WTC11 (cell line): ENCODE measurements at regions of chr19 and their contacts with region 1.

Region 1: DNA sequence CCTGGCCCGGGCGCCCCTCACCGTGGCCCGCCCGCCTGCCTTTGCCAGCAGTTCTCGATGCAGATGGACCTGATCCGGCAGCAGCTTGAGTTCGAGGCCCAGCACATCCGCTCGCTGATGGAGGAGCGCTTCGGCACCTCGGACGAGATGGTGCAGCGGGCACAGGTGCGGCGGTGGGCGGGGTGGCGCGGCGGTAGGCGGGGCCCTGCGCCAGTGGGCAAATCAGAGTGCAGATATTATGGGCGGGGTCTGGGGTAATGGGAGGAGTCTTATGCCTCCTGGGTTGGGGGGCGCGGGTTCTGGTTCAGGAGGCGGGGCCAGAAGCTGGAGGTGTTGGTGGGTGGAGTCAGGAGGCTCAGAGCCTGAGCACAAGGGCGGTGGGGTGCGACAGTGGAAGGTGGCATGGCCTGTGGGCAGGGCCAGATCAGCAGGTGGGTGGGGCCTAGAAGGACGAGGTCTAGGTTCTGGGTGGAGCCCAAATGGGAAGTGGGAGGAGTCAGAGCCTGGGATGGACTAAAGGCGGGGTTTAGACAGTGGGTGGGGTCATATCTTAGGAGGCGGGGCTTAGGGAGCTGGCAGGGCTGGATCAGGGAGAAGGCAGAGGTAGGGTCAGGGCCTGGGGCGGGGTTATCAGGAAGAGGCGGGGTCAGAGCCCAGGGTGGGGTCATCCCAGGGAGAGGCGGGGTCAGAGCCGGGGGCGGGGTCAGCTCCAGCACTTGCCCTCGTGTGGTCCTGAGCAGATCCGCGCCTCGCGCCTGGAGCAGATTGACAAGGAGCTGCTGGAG is 5.6 kb downstream of the APC2 start:
- DNase-seq: peak; percentile 99
- ATAC-seq: peak; percentile 88
- H3K4me3 Mint-ChIP-seq: peak overlapping the region; percentile 47
- H3K27ac Mint-ChIP-seq: no peak overlapping the region
- H3K4me1 Mint-ChIP-seq: peaks cover 6% of the 10 kb centered on the region; the same call in 1 of the 2 replicates
- H3K27me3 Mint-ChIP-seq: peaks cover 55% of the 10 kb centered on the region
- CTCF ChIP-seq: no peak

Region 2: DNA sequence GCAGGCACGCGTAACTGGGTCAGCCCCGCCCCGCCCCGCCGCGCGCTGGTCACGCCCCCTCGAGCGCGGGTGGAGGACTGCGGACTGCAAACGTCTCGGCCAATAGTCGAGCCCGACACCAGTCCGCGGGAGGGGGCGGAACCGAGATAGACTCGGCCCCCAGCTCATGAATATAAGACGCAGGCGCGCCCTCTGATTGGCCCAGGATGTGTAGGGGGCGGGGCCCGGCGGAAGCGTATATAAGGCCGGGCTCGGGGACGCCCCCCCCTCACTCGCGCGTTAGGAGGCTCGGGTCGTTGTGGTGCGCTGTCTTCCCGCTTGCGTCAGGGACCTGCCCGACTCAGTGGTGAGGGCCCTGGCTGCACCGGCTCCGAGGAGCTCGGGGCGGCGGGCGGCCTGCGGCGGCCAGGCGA is 186.5 kb before region 1 on chr19 and contains the start of gene CIRBP:
- CTCF ChIA-PET with region 1: interaction called, 13 read pairs
- POLR2A ChIA-PET with region 1: interaction called, 5 read pairs
- DNase-seq: peak; percentile 100
- ATAC-seq: peak; percentile 74
- H3K4me3 Mint-ChIP-seq: peak within 1 kb of the TSS; percentile 79
- H3K27ac Mint-ChIP-seq: peak within 1 kb of the TSS; percentile 97
- H3K4me1 Mint-ChIP-seq: peaks cover 60% of the 10 kb centered on the region
- H3K27me3 Mint-ChIP-seq: peaks cover 7% of the 10 kb centered on the region
- CTCF ChIP-seq: no peak
- total RNA-seq, gene CIRBP: 256 to 298 TPM (median 256 TPM) in 3 replicates

Region 3: DNA sequence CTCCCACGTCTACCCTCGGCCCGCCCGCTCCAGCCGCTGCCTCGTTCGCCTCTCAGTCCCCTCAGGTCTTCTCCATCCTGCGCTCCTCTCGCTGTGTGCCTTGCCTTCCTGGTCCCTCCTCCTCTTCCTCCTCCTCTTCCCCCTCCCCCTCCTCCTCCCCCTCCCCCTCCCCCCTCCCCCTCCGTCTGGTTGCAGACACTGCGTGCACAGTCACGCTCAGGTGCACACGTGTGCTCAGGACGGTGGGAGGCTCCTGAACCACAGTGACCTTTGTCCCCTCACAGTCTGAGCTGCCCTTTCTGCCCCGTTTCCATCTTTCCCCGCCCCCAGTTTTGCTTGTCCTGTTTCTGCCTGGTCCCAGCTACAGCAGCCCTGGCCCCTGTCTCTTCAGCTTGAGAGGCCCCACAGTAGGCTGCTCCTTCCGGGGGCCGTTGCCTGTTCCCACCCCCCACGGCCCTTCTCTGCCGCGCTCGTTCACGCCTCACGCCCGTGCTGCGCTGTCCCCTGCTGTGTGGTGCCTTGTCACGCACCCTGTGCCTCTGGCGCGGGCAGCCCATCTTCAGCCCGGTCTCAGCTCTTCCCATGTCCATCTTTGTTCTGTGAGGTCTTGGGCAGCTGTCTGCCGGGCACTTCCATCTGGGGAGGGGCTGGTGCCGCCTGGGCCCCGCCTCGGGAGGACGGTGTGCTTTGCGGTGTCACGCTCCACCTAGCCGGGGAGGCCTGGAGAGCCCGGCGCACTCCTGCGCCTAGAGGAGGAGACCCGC is 31.2 kb before region 1 on chr19:
- CTCF ChIA-PET with region 1: no interaction called
- POLR2A ChIA-PET with region 1: no interaction called
- DNase-seq: no peak
- ATAC-seq: no peak
- H3K4me3 Mint-ChIP-seq: no peak overlapping the region
- H3K27ac Mint-ChIP-seq: no peak overlapping the region
- H3K4me1 Mint-ChIP-seq: peaks cover 8% of the 10 kb centered on the region
- H3K27me3 Mint-ChIP-seq: no peaks in the 10 kb centered on the region
- CTCF ChIP-seq: no peak

Region 4: GRCh38 chr19:1470203-1471009 is 14.9 kb after region 1 on chr19:
- CTCF ChIA-PET with region 1: interaction called, 76 read pairs
- POLR2A ChIA-PET with region 1: interaction called, 10 read pairs
- DNase-seq: peak; percentile 77
- ATAC-seq: peak; percentile 24
- H3K4me3 Mint-ChIP-seq: peak overlapping the region; percentile 61
- H3K27ac Mint-ChIP-seq: no peak overlapping the region
- H3K4me1 Mint-ChIP-seq: peaks cover 5% of the 10 kb centered on the region; the same call in 1 of the 2 replicates
- H3K27me3 Mint-ChIP-seq: peaks cover 61% of the 10 kb centered on the region
- CTCF ChIP-seq: no peak